Caco-2 (cell line): ENCODE measurements at regions of chr1 and their contacts with region 1.

Region 1: DNA sequence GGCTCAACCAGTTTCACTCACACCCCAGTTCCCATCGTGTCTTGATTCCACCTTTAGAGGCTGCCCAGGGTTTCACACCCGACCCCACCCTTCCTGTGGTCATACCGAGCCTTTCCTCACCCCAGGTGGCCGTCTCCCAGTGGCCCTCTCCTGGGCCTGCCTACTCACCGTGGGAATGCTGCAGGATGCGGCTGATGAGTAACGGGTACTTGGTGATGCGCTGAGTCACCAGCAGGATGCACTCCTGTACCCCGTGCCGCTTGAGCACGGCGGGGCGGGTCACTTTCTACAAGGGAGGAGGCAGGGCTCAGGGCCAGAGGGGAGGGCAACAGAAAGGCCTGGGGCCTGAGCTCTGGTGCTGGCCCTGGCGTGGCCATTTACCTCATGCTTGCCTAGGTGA is 16.4 kb downstream of the ARHGEF2 start:
- DNase-seq: no peak
- H3K4me3 ChIP-seq: no peak overlapping the region
- H3K4me3 Mint-ChIP-seq: no peak overlapping the region
- H3K27ac Mint-ChIP-seq: no peak overlapping the region
- H3K4me1 ChIP-seq: no peaks in the 10 kb centered on the region
- H3K4me1 Mint-ChIP-seq: no peaks in the 10 kb centered on the region
- H3K27me3 ChIP-seq: no peaks in the 10 kb centered on the region
- H3K27me3 Mint-ChIP-seq: no peaks in the 10 kb centered on the region
- CTCF ChIP-seq: no peak

Region 2: GRCh38 chr1:155989242-155990004 is 27.5 kb after region 1 on chr1:
- CTCF ChIA-PET with region 1: interaction called, 3 read pairs
- POLR2A ChIA-PET with region 1: no interaction called
- intact Hi-C with region 1: loop called (anchors 1 kb)
- DNase-seq: peak; percentile 60 to 80
- H3K4me3 ChIP-seq: no peak overlapping the region
- H3K4me3 Mint-ChIP-seq: no peak overlapping the region
- H3K27ac Mint-ChIP-seq: no peak overlapping the region
- H3K4me1 ChIP-seq: peaks cover 4% of the 10 kb centered on the region
- H3K4me1 Mint-ChIP-seq: peaks cover 2% of the 10 kb centered on the region
- H3K27me3 ChIP-seq: no peaks in the 10 kb centered on the region
- H3K27me3 Mint-ChIP-seq: no peaks in the 10 kb centered on the region
- CTCF ChIP-seq: peak; percentile 94 to 98

Region 3: GRCh38 chr1:156012051-156012817 is 50.3 kb after region 1 on chr1:
- CTCF ChIA-PET with region 1: interaction called, 3 read pairs
- POLR2A ChIA-PET with region 1: interaction called, 10 read pairs
- intact Hi-C with region 1: no loop called
- DNase-seq: no peak
- H3K4me3 ChIP-seq: no peak overlapping the region
- H3K4me3 Mint-ChIP-seq: no peak overlapping the region
- H3K27ac Mint-ChIP-seq: no peak overlapping the region
- H3K4me1 ChIP-seq: no peaks in the 10 kb centered on the region
- H3K4me1 Mint-ChIP-seq: peaks cover 8% of the 10 kb centered on the region
- H3K27me3 ChIP-seq: no peaks in the 10 kb centered on the region
- H3K27me3 Mint-ChIP-seq: no peaks in the 10 kb centered on the region
- CTCF ChIP-seq: no peak